Caco-2 (cell line): ENCODE measurements at regions of chr16 and their contacts with region 1.

Region 1: DNA sequence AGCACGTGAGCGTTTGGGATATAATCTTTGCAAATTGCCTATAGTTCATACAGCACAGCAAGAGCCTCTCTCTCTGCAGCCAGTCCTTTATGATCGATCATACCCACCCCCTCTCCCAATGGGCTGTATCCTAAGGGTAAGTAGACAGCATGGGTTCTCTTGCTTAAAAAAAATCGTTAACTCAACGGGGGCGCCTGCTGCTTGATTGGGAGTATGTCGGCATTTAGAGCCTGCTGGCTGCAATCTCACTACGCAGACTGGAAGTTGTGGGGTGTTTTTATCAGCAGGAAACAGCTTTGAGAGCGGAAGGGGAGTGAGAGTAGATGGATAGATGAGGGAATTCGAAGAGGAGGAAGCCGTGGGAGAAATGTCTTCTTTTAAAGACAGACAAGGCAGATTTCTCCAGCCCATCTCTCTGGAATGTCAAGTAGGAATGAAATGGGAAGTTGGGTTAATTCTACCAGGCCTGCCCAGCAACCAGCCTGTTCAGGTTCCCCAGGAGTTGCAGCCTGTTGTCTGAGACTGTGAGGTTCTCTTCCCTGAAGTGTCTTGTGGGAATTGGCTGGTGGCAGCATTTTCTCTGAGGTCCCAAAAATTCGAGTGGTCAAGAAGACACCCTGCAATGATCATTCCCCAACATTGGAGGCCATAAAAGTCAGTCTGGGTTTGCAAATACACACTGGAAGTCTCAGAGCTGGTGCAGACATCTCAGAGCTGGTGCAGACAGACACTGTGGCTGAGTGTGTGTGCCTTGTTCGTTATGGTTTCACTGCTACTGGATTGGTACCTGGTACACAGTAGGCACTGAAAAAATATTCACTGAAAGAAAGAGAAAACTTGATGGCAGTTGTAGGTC is 65.6 kb downstream of the PRKCB start:
- DNase-seq: no peak
- H3K4me3 ChIP-seq: no peak overlapping the region
- H3K4me3 Mint-ChIP-seq: no peak overlapping the region
- H3K27ac Mint-ChIP-seq: no peak overlapping the region
- H3K4me1 ChIP-seq: no peaks in the 10 kb centered on the region
- H3K4me1 Mint-ChIP-seq: no peaks in the 10 kb centered on the region
- H3K27me3 ChIP-seq: no peaks in the 10 kb centered on the region
- H3K27me3 Mint-ChIP-seq: peaks cover 2% of the 10 kb centered on the region
- CTCF ChIP-seq: no peak

Region 2: GRCh38 chr16:23823475-23824384 is 77.7 kb before region 1 on chr16:
- CTCF ChIA-PET with region 1: no interaction called
- POLR2A ChIA-PET with region 1: interaction called, 11 read pairs
- intact Hi-C with region 1: no loop called
- DNase-seq: no peak
- H3K4me3 ChIP-seq: no peak overlapping the region
- H3K4me3 Mint-ChIP-seq: no peak overlapping the region
- H3K27ac Mint-ChIP-seq: no peak overlapping the region
- H3K4me1 ChIP-seq: no peaks in the 10 kb centered on the region
- H3K4me1 Mint-ChIP-seq: no peaks in the 10 kb centered on the region
- H3K27me3 ChIP-seq: no peaks in the 10 kb centered on the region
- H3K27me3 Mint-ChIP-seq: peaks cover 3% of the 10 kb centered on the region
- CTCF ChIP-seq: no peak